ENCODE measurements at regions of chr3 and their contacts with region 1.

Region 1: DNA sequence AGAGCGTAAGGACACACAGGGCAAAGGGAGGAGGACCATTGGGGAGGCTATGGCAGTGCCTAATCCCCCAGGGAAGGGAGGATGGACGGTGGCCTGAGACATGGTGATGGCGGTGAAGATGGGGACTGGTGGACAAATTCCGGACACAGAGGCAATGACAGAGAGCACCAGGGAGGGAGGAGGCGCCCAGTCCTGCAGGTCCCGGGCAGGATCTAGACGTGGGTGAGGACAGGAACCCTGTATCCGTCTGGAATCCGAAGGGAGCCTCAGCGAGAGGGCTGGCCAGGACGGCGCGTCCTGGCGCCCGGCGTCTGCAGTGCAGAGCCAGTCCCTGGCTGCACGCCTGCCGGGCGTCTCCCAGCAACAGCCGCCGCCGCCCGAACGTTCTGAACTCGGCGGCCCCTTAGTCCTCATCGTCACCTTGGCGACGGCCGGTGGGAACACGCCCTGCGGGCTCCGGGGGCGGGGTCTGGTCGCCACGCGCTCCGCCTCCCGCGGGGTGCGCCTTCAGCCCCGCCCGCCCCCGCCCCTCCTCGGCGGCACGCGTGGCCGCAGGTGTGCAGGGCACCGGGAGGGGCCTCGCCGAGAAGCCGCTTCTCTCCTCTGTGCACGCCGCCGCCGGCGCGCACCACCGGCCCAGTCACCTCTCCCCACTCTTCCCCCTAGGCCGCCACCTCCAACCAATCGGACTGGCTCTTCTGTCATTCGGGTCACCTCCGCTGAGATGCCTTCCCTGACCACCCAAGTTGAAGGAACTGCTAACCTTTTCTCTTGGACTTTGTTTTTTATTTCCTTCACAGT is 11.6 kb downstream of the XIRP1 start:
- DNase-seq: peak; percentile 75 to 95
- H3K4me3 ChIP-seq: peak overlapping the region; percentile 57
- H3K27ac ChIP-seq: no peak overlapping the region
- H3K4me1 ChIP-seq: peaks cover 37% of the 10 kb centered on the region
- H3K27me3 ChIP-seq: no peaks in the 10 kb centered on the region
- CTCF ChIP-seq: no peak

Region 2: GRCh38 chr3:39107388-39108199 is 73.2 kb before region 1 on chr3 and contains the starts of genes GORASP1 and TTC21A:
- CTCF ChIA-PET with region 1: no interaction called
- POLR2A ChIA-PET with region 1: interaction called, 6 read pairs
- intact Hi-C with region 1: loop called (anchors 5 kb)
- DNase-seq: peak; percentile 64 to 71
- H3K4me3 ChIP-seq: peak within 1 kb of the TSS; percentile 95
- H3K27ac ChIP-seq: no peak within 1 kb of the TSS
- H3K4me1 ChIP-seq: peaks cover 16% of the 10 kb centered on the region
- H3K27me3 ChIP-seq: no peaks in the 10 kb centered on the region
- CTCF ChIP-seq: no peak
- total RNA-seq, gene GORASP1: 43.4 and 44.4 TPM in 2 replicates
- total RNA-seq, gene TTC21A: 9.0 and 9.5 TPM in 2 replicates

Region 3: GRCh38 chr3:39141171-39141995 is 39.4 kb before region 1 on chr3:
- CTCF ChIA-PET with region 1: no interaction called
- POLR2A ChIA-PET with region 1: interaction called, 32 read pairs
- intact Hi-C with region 1: loop called (anchors 1 kb)
- DNase-seq: peak; percentile 92 to 97
- H3K4me3 ChIP-seq: no peak overlapping the region; the same call in 1 of the 2 replicates
- H3K27ac ChIP-seq: peak overlapping the region; percentile 77
- H3K4me1 ChIP-seq: peaks cover 52% of the 10 kb centered on the region
- H3K27me3 ChIP-seq: no peaks in the 10 kb centered on the region
- CTCF ChIP-seq: no peak

Region 4: DNA sequence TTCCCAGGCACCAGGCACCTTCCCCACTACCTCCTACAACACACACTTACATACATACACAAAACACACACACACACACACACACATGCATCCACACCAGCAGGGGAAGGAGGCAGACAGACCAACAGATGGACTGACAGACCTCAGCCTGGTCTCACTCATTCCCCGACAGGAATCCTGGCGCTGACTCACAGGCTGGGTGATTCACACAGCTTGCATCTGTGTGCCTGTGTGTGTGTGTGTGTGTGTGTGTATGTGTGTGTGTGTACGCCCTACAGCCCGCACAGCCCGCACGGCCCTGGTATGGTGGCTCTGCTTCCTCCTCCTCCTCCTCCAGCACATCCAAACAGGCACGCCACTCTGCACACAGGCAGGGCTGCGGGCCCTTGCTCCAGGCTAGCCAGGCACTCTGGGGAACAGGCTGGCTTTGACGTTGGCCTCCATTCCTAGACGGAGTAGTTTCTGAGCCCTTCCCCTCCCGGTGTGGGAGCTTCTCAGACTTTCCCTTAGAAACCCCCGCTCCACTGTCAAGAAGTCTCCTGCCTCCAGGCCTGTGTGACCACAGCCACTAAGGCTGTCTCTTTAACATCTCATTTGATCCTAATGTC is 33.7 kb before region 1 on chr3:
- CTCF ChIA-PET with region 1: no interaction called
- POLR2A ChIA-PET with region 1: interaction called, 6 read pairs
- intact Hi-C with region 1: loop called (anchors 1 kb)
- DNase-seq: peak; percentile 85 to 88
- H3K4me3 ChIP-seq: peak overlapping the region; percentile 40; the same call in 1 of the 2 replicates
- H3K27ac ChIP-seq: peak overlapping the region; percentile 65
- H3K4me1 ChIP-seq: peaks cover 83% of the 10 kb centered on the region
- H3K27me3 ChIP-seq: no peaks in the 10 kb centered on the region
- CTCF ChIP-seq: no peak

Region 5: GRCh38 chr3:39254806-39255449 is 74.2 kb after region 1 on chr3:
- CTCF ChIA-PET with region 1: no interaction called
- POLR2A ChIA-PET with region 1: no interaction called
- intact Hi-C with region 1: no loop called
- DNase-seq: no peak
- H3K4me3 ChIP-seq: no peak overlapping the region
- H3K27ac ChIP-seq: no peak overlapping the region
- H3K4me1 ChIP-seq: no peaks in the 10 kb centered on the region
- H3K27me3 ChIP-seq: peaks cover 53% of the 10 kb centered on the region
- CTCF ChIP-seq: no peak